WTC11 (cell line): ENCODE measurements at regions of chr5 and their contacts with region 1.

Region 1: DNA sequence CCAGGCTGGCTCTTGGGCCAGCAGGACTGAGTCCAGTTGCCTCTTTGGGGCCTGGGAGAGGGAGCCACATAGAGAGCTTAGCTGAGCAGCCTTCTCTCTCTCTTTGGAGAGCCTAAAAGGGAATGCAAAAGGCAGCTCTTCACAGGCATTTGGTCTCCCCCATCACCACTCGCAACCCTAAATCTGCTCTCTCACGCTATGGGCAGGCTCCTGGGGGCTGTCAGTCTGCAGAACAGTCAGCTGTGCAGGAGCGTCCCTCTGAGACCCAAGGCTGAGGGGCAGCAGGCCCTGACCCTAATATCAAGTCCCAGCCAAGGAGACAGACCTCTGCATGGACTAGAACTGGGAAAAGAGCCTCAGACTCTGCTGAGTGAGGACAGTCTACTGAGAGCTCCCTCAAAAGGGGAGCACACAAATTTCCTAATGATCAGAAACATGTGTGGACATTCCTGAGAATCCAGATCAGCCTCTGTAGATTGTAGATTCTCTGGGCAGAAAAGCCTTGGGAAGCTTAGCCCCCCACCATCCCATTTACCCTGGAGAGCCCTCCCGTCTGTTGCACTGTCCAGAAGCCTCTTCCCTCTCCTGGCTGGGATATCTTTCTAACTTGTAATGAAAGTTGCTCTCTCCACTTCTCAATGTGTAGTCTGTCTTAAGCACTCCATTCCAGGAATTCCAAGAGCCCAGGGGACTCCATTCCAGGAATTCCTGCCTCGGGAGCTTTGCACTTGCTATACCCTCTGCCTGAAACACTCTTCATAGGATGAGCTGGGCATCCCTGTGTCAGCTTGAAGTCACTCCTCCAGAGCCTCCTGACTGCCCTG is 79.4 kb downstream of the FAM114A2 start:
- DNase-seq: peak; percentile 57
- ATAC-seq: peak; percentile 93
- H3K4me3 Mint-ChIP-seq: no peak overlapping the region
- H3K27ac Mint-ChIP-seq: peak overlapping the region; percentile 73
- H3K4me1 Mint-ChIP-seq: peaks cover 28% of the 10 kb centered on the region
- H3K27me3 Mint-ChIP-seq: no peaks in the 10 kb centered on the region; the same call in 1 of the 2 replicates
- CTCF ChIP-seq: no peak

Region 2: DNA sequence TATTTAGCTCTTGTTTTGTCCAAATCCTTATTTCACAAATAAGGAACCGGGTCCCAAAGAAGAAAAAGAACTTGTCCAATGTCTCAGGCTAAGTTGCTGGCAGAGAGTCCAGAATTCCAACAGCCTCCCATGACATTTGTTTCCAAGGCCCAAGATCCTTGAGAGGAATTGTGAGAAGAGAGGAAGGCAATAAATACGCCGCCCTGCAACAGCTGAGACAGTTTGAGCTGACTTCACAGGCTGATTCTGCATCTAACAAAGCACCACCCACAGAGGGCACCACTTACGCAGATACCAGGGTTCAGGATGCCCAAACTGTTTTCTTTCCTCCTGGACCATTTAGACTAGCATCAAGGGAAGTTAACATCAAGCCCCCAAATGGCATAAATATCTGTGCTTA is 131.9 kb before region 1 on chr5:
- CTCF ChIA-PET with region 1: interaction called, 56 read pairs
- POLR2A ChIA-PET with region 1: no interaction called
- DNase-seq: peak; percentile 42
- ATAC-seq: peak; percentile 40
- H3K4me3 Mint-ChIP-seq: no peak overlapping the region
- H3K27ac Mint-ChIP-seq: no peak overlapping the region
- H3K4me1 Mint-ChIP-seq: peaks cover 33% of the 10 kb centered on the region
- H3K27me3 Mint-ChIP-seq: 0 out of 2 replicates have a peak, but pooled peaks cover 4% of the 10 kb centered on the region
- CTCF ChIP-seq: no peak